Head of caudate nucleus (tissue), 42 donors: ENCODE measurements at regions of chr12 and their contacts with region 1.

Region 1: GRCh38 chr12:94560431-94561221 is 89.7 kb downstream of the TMCC3 start:
- DNase-seq: peak; percentile 60 to 92 (median 78)

Region 2: DNA sequence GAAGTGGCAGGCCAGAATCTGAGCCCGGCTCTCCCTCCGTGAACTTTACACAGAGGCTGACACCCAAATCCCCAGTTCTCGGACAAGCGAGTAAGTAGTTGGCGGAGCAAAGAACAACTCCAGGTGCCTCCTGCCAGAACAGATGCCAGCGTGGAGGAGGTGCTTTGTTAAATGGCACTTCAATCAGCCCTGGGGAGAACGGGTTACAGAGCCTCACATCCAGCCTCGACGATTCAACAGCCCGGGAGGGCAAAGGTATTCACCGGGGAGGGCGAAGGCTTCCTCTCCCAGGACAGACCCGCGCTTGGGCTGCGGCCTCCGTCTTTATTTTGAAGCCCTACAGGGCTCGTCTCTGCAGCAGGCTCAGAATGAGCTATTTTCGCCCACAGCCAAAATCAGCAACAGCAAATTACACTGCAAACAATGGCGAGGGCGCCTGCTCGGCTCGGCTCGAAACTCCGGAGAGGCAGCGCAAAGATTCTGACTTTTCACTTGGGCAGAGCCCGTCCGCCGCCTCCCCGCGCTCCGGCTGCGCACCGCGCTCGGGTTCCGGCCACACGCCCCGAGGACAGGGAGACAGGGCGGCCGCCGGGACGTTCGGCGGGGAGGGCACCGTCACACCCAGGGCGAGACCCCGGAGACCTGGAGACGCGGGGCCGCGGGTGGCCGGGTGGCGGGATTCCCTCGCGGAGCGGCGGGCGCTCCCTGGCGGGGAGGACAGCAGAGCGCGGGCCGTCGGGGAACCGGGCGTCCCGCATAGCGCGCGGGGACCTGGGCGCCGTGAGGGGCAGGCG is 88.9 kb after region 1 on chr12:
- intact Hi-C with region 1: loop called (anchors 5 kb)
- DNase-seq: peak in 41 of 42 donors; percentile 26 to 85 (median 68)